Right ventricle myocardium inferior (tissue), 1 donor: ENCODE measurements at regions of chr4 and their contacts with region 1.

Region 1: DNA sequence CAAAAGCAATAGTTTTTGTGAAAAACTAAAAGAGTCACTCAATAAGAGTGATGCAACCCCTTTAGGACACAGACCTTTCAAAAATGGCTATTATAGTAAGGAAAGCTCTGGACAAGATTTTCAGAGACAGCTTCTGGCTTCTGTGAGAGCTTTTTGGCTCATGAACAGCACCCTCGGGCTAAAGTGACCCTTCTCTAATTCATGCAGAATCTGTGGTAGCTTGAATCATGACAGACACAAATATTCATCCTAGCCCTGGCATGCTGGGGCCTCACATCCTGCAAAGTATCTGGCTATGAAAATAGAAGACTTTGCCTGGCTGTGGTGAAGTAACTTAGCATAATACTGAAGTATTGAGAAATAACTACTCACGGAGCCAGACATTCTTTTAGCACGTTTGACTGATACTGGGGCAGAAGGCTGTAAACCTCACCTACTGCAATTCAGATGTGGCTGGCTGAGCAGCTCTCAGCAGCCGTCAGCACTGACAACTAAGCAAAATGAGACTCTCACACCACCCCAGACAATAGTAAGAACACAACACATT is 327.3 kb downstream of the MAPK10 start:
- DNase-seq: peak; percentile 59
- ATAC-seq: peak; percentile 92

Region 2: GRCh38 chr4:85826060-85826678 is 206.4 kb before region 1 on chr4:
- intact Hi-C with region 1: loop called (anchors 10 kb)
- DNase-seq: no peak
- ATAC-seq: peak; percentile 25